T-cell (primary cell): ENCODE measurements at regions of chr2 and their contacts with region 1.

Region 1: DNA sequence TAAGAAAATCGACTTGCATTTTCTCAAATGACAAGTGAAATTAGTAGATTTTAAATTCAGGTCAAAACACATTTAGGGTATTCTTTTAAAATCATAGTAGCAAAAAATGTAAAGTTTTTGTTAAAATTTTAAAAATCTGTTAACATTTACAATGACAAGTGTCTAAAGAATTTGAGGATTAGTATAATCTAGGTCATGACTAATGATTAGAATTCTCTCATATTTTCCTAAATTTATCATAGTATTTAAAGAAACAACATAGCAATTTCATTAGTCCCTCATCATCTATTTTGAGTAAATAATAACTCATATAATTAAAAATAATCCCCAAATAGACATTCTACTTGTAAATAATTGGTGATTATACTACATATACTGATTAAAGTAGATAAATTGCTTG is 23.6 kb downstream of the THUMPD2 start:
- DNase-seq: no peak
- ATAC-seq: no peak
- H3K4me3 ChIP-seq: no peak overlapping the region
- H3K4me3 Mint-ChIP-seq: no peak overlapping the region
- H3K27ac ChIP-seq: no peak overlapping the region
- H3K27ac Mint-ChIP-seq: no peak overlapping the region
- H3K4me1 ChIP-seq: no peaks in the 10 kb centered on the region
- H3K4me1 Mint-ChIP-seq: no peaks in the 10 kb centered on the region
- H3K27me3 ChIP-seq: no peaks in the 10 kb centered on the region
- H3K27me3 Mint-ChIP-seq: no peaks in the 10 kb centered on the region

Region 2: GRCh38 chr2:39737661-39738060 is 17.8 kb before region 1 on chr2:
- CTCF ChIA-PET with region 1: no interaction called
- POLR2A ChIA-PET with region 1: no interaction called
- DNase-seq: no peak
- ATAC-seq: no peak
- H3K4me3 ChIP-seq: no peak overlapping the region
- H3K4me3 Mint-ChIP-seq: no peak overlapping the region
- H3K27ac ChIP-seq: no peak overlapping the region
- H3K27ac Mint-ChIP-seq: no peak overlapping the region
- H3K4me1 ChIP-seq: no peaks in the 10 kb centered on the region
- H3K4me1 Mint-ChIP-seq: peaks cover 0 to 6% (median 0%) of the 10 kb centered on the region in 3 donors
- H3K27me3 ChIP-seq: no peaks in the 10 kb centered on the region
- H3K27me3 Mint-ChIP-seq: no peaks in the 10 kb centered on the region

Region 3: GRCh38 chr2:39780825-39781600 is 25.5 kb after region 1 on chr2:
- CTCF ChIA-PET with region 1: interaction called in 1 of 2 experiments, 4 read pairs
- POLR2A ChIA-PET with region 1: interaction called, 3 to 11 read pairs
- DNase-seq: peak in 1 of 35 experiments; percentile 9
- ATAC-seq: no peak
- H3K4me3 ChIP-seq: no peak overlapping the region
- H3K4me3 Mint-ChIP-seq: peak overlapping the region; percentile 90 to 98 (median 95)
- H3K27ac ChIP-seq: no peak overlapping the region
- H3K27ac Mint-ChIP-seq: peak overlapping the region; percentile 13 to 40
- H3K4me1 ChIP-seq: peaks cover 9 to 13% of the 10 kb centered on the region in 2 experiments
- H3K4me1 Mint-ChIP-seq: peaks cover 42 to 56% (median 48%) of the 10 kb centered on the region in 3 donors
- H3K27me3 ChIP-seq: no peaks in the 10 kb centered on the region
- H3K27me3 Mint-ChIP-seq: peaks cover 0 to 4% of the 10 kb centered on the region in 2 donors

Region 4: DNA sequence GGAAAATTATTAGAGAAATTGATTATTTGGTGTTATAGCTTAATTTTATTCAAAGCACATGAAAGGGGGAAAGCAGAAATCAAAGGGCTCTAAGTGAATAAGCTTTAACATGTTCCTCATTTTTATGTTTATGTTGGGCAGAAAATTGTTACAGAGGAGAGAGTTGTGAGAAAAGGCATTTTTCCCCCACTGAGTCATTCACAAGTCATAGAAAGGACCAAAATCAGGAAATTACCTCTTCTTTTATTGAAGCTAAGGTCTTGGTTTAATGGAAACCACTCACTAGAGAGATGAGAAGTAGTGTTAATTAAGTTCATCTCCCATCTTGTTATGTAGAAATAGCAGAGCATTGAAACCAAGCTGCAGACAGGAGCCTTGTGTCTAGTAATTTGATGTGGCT is 198.9 kb after region 1 on chr2:
- CTCF ChIA-PET with region 1: no interaction called
- POLR2A ChIA-PET with region 1: no interaction called
- DNase-seq: no peak
- ATAC-seq: no peak
- H3K4me3 ChIP-seq: no peak overlapping the region
- H3K4me3 Mint-ChIP-seq: no peak overlapping the region
- H3K27ac ChIP-seq: no peak overlapping the region
- H3K27ac Mint-ChIP-seq: no peak overlapping the region
- H3K4me1 ChIP-seq: no peaks in the 10 kb centered on the region
- H3K4me1 Mint-ChIP-seq: no peaks in the 10 kb centered on the region
- H3K27me3 ChIP-seq: no peaks in the 10 kb centered on the region
- H3K27me3 Mint-ChIP-seq: no peaks in the 10 kb centered on the region